OCI-LY7 (cell line): ENCODE measurements at regions of chr6 and their contacts with region 1.

Region 1: GRCh38 chr6:153023977-153024708 is 21.6 kb upstream of the MTRF1L start:
- DNase-seq: peak; percentile 78
- H3K4me3 ChIP-seq: no peak overlapping the region
- H3K27ac ChIP-seq: no peak overlapping the region
- H3K4me1 ChIP-seq: no peaks in the 10 kb centered on the region
- CTCF ChIP-seq: peak; percentile 89

Region 2: DNA sequence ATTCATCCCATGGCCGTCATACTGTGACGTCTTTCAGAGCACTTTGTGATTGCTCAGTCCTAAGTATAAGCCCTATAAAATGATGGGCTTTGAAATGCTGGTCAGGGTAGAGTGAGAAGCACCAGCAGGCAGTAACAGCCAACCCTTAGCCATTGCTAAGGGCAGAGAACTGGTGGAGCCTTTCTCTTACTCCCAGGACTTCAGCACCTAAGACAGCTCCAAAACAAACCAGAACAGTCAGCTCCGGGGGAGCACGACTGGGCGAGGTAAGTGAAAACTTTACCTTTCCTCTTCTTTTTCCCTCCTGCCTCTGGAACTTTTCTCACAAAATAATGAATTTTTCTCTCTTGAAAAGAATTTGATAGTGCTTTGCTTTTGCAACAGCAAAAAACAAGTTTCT is 273.4 kb before region 1 on chr6 and contains the start of gene VIP:
- CTCF ChIA-PET with region 1: no interaction called
- POLR2A ChIA-PET with region 1: no interaction called
- intact Hi-C with region 1: loop called (anchors 5 kb)
- DNase-seq: peak; percentile 10
- H3K4me3 ChIP-seq: no peak within 1 kb of the TSS
- H3K27ac ChIP-seq: no peak within 1 kb of the TSS
- H3K4me1 ChIP-seq: no peaks in the 10 kb centered on the region
- CTCF ChIP-seq: no peak
- total RNA-seq, gene VIP: not detected in 2 replicates

Region 3: GRCh38 chr6:152863618-152864326 is 160.4 kb before region 1 on chr6:
- CTCF ChIA-PET with region 1: no interaction called
- POLR2A ChIA-PET with region 1: no interaction called
- intact Hi-C with region 1: loop called (anchors 2 kb)
- DNase-seq: peak; percentile 73
- H3K4me3 ChIP-seq: no peak overlapping the region
- H3K27ac ChIP-seq: no peak overlapping the region
- H3K4me1 ChIP-seq: no peaks in the 10 kb centered on the region
- CTCF ChIP-seq: peak; percentile 91

Region 4: GRCh38 chr6:152954443-152954842 is 69.7 kb before region 1 on chr6:
- CTCF ChIA-PET with region 1: interaction called, 3 read pairs
- POLR2A ChIA-PET with region 1: interaction called, 3 read pairs
- intact Hi-C with region 1: loop called (anchors 1 kb)
- DNase-seq: no peak
- H3K4me3 ChIP-seq: no peak overlapping the region
- H3K27ac ChIP-seq: no peak overlapping the region
- H3K4me1 ChIP-seq: no peaks in the 10 kb centered on the region
- CTCF ChIP-seq: peak; percentile 41

Region 5: DNA sequence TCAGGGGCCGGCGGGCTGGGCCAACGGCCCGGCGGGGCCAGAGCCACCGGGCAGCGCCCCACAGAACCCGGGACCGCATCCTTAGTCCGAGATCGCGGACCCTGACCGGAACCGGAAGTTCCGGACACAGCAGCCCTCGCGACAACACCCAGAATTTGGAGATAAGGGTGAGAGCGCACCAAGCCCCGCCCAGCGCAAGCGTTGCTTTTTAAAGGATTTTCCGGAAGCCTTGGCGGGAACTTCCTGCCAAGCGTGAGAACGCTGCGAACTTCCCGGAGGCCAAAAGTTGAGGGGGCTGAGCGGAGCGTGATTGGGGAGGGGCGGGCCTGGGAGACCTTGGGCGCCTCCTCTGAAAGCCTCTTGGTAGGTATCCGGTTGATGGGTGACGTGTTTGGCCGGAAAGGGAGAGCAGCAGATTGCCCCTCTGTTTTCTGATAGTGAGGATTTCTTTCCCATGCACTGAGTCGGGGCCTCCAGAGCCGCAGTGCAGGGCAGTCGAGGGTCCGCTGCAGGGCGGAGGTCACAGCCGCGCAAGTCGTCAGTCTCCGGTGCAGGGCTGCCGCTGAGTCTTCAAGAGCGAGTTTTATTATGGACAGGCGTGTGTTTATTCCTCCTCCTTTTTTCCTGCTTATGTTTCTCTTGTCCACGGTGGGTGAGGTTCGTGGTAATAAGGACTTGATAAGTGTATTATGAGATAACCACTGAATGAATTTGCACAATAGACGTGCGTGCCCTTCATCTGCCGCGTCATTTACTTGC is 21.4 kb before region 1 on chr6 and contains the start of gene MTRF1L:
- CTCF ChIA-PET with region 1: no interaction called
- POLR2A ChIA-PET with region 1: no interaction called
- intact Hi-C with region 1: loop called (anchors 2 kb)
- DNase-seq: peak; percentile 96
- H3K4me3 ChIP-seq: peak within 1 kb of the TSS; percentile 75
- H3K27ac ChIP-seq: peak within 1 kb of the TSS; percentile 57
- H3K4me1 ChIP-seq: peaks cover 22% of the 10 kb centered on the region
- CTCF ChIP-seq: no peak
- total RNA-seq, gene MTRF1L: 10.4 and 11.0 TPM in 2 replicates